Mammary epithelial cell (primary cell): ENCODE measurements at regions of chrX and their contacts with region 1.

Region 1: GRCh38 chrX:24259544-24260240 is 54.2 kb downstream of the SUPT20HL2 start:
- DNase-seq: peak; percentile 64
- H3K4me3 ChIP-seq: no peak overlapping the region
- H3K27ac ChIP-seq: no peak overlapping the region
- H3K4me1 ChIP-seq: no peaks in the 10 kb centered on the region
- H3K27me3 ChIP-seq: no peaks in the 10 kb centered on the region
- CTCF ChIP-seq: peak; percentile 79 to 83

Region 2: GRCh38 chrX:22855693-22856092 is 1404.0 kb before region 1 on chrX:
- CTCF ChIA-PET with region 1: no interaction called
- dilution Hi-C with region 1: no loop called
- in situ Hi-C with region 1: no loop called
- intact Hi-C with region 1: loop called (anchors 10 kb)
- DNase-seq: no peak
- H3K4me3 ChIP-seq: no peak overlapping the region
- H3K27ac ChIP-seq: no peak overlapping the region
- H3K4me1 ChIP-seq: no peaks in the 10 kb centered on the region
- H3K27me3 ChIP-seq: no peaks in the 10 kb centered on the region
- CTCF ChIP-seq: no peak

Region 3: DNA sequence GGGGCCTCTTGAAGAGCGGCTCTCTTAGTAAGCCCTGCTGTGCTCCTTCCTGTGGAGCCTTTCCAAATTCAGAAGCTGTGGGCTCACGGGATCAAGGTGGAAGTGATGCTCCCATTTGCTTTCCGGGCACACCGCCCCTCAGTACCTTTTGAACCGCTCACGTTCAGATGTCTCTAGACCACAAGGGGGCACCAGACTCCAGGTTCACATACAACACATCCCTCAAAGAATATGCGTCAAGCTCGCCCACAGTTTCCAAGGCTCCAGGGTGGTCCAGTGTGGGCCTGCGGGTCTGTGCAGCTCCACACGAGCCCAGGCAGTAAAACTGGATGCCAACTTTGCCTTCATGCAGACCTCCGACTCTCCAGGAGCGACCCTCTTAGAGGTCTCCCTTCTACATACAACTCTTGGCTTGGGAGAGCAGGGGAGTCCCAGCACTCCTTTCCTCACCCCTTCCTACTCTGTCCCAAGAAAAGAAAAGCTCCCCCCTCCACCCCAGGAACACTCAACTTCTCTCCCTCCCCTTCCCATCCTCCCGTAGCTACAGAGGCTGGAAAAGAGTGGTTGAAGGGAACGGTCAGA is 111.8 kb after region 1 on chrX:
- CTCF ChIA-PET with region 1: no interaction called
- dilution Hi-C with region 1: no loop called
- in situ Hi-C with region 1: no loop called
- intact Hi-C with region 1: loop called (anchors 5 kb)
- DNase-seq: peak; percentile 41
- H3K4me3 ChIP-seq: no peak overlapping the region
- H3K27ac ChIP-seq: no peak overlapping the region
- H3K4me1 ChIP-seq: no peaks in the 10 kb centered on the region
- H3K27me3 ChIP-seq: peaks cover 8% of the 10 kb centered on the region
- CTCF ChIP-seq: peak; percentile 77 to 80

Region 4: GRCh38 chrX:24498975-24499374 is 239.3 kb after region 1 on chrX:
- CTCF ChIA-PET with region 1: interaction called, 14 read pairs
- dilution Hi-C with region 1: no loop called
- in situ Hi-C with region 1: no loop called
- intact Hi-C with region 1: loop called (anchors 1 kb)
- DNase-seq: peak; percentile 25
- H3K4me3 ChIP-seq: no peak overlapping the region
- H3K27ac ChIP-seq: no peak overlapping the region
- H3K4me1 ChIP-seq: no peaks in the 10 kb centered on the region
- H3K27me3 ChIP-seq: no peaks in the 10 kb centered on the region
- CTCF ChIP-seq: peak; percentile 63 to 66